Calu3 (cell line): ENCODE measurements at regions of chr14 and their contacts with region 1.

Region 1: DNA sequence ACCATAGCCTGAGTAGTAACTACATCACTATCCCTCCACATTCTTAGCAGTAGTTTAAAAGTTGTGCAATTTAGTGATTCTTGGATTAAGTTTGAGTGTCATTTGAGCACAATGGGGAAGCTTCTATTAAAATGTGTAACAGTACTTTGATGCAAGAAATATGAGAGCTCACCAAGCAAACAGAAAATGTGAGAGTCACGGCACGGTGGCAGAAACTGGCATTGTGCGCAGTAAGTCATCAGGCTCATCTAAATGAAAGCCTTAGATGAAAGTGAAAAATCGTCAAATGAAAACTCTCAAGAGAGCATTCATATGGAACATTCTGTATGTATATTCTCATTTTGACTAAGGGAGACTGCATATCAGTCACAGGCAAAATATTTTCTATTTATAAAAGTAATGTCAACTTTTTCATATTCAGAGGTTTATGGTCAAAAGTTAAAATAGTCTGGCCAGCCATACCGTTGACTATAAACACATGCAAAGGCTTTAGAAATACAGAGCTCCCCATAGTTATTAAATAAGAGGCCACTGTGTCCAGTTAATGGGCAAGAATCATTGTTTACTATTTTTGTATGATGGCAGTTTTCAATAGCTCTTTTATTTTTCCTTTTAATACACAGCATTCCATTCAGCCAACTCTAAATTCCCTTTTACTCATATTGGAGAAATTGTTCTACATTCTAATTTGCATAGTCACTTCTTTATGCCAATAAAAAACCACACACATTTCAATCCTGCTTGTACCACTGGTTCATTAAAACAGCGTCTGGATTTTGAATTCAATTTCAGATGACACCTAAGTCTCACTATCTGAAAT is 167.9 kb downstream of the PRKD1 start:
- DNase-seq: no peak
- H3K4me3 Mint-ChIP-seq: no peak overlapping the region
- H3K27ac Mint-ChIP-seq: no peak overlapping the region
- H3K4me1 Mint-ChIP-seq: peaks cover 21% of the 10 kb centered on the region
- H3K27me3 Mint-ChIP-seq: no peaks in the 10 kb centered on the region
- CTCF ChIP-seq: no peak

Region 2: GRCh38 chr14:29403091-29403490 is 356.6 kb before region 1 on chr14:
- CTCF ChIA-PET with region 1: no interaction called
- intact Hi-C with region 1: no loop called
- DNase-seq: no peak
- H3K4me3 Mint-ChIP-seq: no peak overlapping the region
- H3K27ac Mint-ChIP-seq: no peak overlapping the region
- H3K4me1 Mint-ChIP-seq: no peaks in the 10 kb centered on the region
- H3K27me3 Mint-ChIP-seq: no peaks in the 10 kb centered on the region
- CTCF ChIP-seq: no peak

Region 3: GRCh38 chr14:29906256-29906898 is 146.6 kb after region 1 on chr14:
- CTCF ChIA-PET with region 1: no interaction called
- intact Hi-C with region 1: loop called (anchors 5 kb)
- DNase-seq: peak; percentile 57
- H3K4me3 Mint-ChIP-seq: peak overlapping the region; percentile 28
- H3K27ac Mint-ChIP-seq: peak overlapping the region; percentile 82
- H3K4me1 Mint-ChIP-seq: peaks cover 25% of the 10 kb centered on the region
- H3K27me3 Mint-ChIP-seq: no peaks in the 10 kb centered on the region
- CTCF ChIP-seq: no peak